OCI-LY7 (cell line): ENCODE measurements at regions of chr2 and their contacts with region 1.

Region 1: GRCh38 chr2:97663965-97664635 is at the start of gene ACTR1B:
- DNase-seq: peak; percentile 99
- H3K4me3 ChIP-seq: peak within 1 kb of the TSS; percentile 90
- H3K27ac ChIP-seq: peak within 1 kb of the TSS; percentile 69
- H3K4me1 ChIP-seq: peaks cover 16% of the 10 kb centered on the region
- CTCF ChIP-seq: peak; percentile 83
- total RNA-seq, gene ACTR1B: 67.8 and 71.2 TPM in 2 replicates

Region 2: DNA sequence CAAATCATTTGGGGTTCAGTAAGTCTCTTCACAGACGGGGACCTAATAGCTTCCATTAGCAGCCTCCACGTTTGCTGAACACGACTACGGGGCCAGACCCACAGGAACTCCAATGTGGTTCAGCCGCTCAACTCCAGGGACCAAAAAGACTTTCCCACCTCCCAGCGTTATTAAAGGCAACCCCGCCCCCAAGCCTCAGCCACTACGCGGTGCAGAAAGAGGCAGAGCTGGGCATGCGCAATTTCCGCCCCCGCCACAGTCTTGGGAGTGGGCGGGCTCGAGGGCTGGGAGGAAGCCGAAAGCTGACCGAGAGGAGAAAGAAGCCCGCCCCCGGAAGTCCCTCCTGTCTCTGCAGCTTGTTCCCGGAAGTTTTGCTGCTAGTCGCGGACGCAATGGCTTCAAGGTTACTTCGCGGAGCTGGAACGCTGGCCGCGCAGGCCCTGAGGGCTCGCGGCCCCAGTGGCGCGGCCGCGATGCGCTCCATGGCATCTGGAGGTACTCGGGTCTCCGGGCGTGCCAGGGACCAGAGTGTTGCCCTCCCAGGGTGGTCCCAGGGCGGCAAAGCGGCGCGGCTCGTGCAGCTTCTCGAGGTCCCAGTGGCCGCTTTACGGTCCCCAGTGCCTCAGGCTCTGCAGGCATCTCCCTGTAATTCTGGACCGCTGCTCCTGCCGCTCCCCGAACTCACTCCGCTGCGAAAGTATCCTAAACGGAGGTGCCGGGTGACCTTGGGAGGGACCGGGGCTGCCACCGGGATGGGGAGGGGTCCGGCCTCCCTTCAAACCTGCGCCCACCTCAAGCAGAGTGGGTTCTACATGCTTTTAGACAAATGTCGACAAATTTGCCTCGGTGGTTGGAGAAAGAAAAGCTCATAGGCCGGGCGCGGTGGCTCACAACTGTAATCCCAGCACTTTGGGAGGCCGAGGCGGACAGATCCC is 18.1 kb before region 1 on chr2 and contains the start of gene COX5B:
- CTCF ChIA-PET with region 1: interaction called, 7 read pairs
- POLR2A ChIA-PET with region 1: interaction called, 44 read pairs
- intact Hi-C with region 1: loop called (anchors 1 kb)
- DNase-seq: peak; percentile 98
- H3K4me3 ChIP-seq: peak within 1 kb of the TSS; percentile 88
- H3K27ac ChIP-seq: peak within 1 kb of the TSS; percentile 28
- H3K4me1 ChIP-seq: peaks cover 20% of the 10 kb centered on the region
- CTCF ChIP-seq: no peak
- total RNA-seq, gene COX5B: 237 and 276 TPM in 2 replicates

Region 3: GRCh38 chr2:97697252-97698235 is 33.4 kb after region 1 on chr2:
- CTCF ChIA-PET with region 1: interaction called, 3 read pairs
- POLR2A ChIA-PET with region 1: interaction called, 4 read pairs
- intact Hi-C with region 1: loop called (anchors 1 kb)
- DNase-seq: peak; percentile 89
- H3K4me3 ChIP-seq: peak overlapping the region; percentile 15
- H3K27ac ChIP-seq: no peak overlapping the region
- H3K4me1 ChIP-seq: peaks cover 6% of the 10 kb centered on the region
- CTCF ChIP-seq: peak; percentile 98

Region 4: DNA sequence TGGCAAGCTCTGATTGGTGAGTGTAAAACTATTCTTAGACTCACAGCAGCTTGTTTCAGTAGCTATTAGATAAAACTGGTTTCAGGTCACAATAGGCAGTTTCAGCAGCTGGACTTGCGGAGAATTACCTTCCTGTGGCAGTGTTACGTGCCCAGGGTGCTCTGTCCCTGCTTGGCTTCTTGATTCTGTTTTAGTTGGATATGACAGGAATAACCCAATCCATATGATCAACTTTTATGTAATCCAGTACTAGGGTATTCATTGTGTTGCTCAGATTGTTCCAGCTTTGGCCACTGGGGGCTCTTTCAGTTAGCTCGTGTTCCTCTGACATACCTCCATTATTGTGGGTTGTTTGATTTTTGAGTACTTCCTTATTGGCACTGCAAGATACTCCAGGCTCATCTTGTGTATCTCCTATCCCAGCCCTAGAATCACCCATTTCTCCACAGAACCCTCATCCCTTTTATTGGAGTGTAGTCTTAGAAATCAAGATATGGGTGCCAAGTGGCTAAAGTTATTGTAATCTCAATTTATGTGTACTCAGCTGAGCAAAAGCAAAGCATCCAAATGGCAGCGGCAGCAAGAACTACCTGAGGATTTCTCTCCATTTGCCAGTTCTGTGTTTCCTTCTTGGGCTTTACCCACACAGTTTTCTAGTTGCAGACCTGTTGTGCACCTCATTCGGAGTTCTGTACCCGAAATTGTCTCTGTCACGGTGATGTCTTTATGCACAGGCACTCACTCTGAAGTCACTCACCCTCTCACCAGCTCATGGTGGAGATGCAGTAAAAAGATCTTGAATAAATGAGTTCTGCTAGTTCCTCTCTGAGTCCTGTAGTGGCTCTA is 823.9 kb after region 1 on chr2:
- CTCF ChIA-PET with region 1: interaction called, 11 read pairs
- POLR2A ChIA-PET with region 1: no interaction called
- intact Hi-C with region 1: no loop called
- DNase-seq: peak; percentile 59
- H3K4me3 ChIP-seq: no peak overlapping the region
- H3K27ac ChIP-seq: no peak overlapping the region
- H3K4me1 ChIP-seq: peaks cover 37% of the 10 kb centered on the region
- CTCF ChIP-seq: peak; percentile 83